B cell (primary cell): ENCODE measurements at regions of chr7 and their contacts with region 1.

Region 1: GRCh38 chr7:151080522-151081169 is at the start of gene FASTK:
- DNase-seq: peak; percentile 90
- ATAC-seq: peak; percentile 82
- H3K4me3 ChIP-seq: peak within 1 kb of the TSS; percentile 58 to 92 (median 89)
- H3K4me3 Mint-ChIP-seq: peak within 1 kb of the TSS; percentile 87
- H3K27ac ChIP-seq: peak within 1 kb of the TSS; percentile 68 to 92
- H3K27ac Mint-ChIP-seq: peak within 1 kb of the TSS; percentile 88
- H3K4me1 ChIP-seq: peaks cover 42 to 52% of the 10 kb centered on the region in 2 donors
- H3K4me1 Mint-ChIP-seq: peaks cover 52% of the 10 kb centered on the region
- H3K27me3 ChIP-seq: peaks cover 0 to 20% (median 8%) of the 10 kb centered on the region in 4 experiments
- H3K27me3 Mint-ChIP-seq: peaks cover 11% of the 10 kb centered on the region
- CTCF ChIP-seq: no peak
- total RNA-seq, gene FASTK: 119 and 120 TPM in 2 replicates

Region 2: DNA sequence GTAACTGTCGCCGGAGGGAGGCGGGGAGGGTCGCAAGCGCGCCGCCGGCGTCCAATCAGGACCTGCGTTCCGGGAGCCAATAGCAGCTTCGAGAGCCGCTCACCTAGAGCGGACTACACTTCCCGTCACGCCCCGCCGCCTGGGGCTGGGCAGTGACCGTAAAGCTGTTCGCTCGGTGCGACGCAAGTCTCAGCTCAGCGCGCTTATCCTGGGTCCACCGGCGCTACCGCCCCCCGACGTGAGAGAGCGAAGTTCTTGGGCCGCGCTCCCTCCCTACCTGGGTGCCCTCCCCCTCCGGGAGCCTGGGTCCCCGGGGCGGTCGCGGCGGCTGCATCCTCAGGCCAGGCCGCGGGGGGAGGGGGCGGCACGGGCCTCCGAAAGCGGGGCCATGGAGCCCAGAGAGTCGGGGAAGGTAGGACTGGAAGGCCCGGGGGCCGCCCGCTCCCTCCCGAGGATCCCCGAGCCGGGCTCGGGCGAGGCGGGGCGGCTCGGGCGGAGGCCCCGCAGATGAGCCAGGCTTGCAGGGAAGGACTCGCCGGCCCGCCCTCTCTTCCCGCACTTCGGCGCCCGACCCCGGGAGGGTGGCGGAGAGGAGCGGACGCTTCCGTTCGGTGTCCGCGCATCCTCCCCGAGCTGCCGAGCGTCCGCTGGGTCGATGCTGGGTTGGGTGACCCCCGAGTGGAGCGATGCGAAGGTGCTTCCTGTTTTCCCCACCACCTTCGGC is 1242.3 kb before region 1 on chr7 and contains the start of gene ZNF862:
- CTCF ChIA-PET with region 1: no interaction called
- POLR2A ChIA-PET with region 1: no interaction called
- intact Hi-C with region 1: loop called (anchors 5 kb)
- DNase-seq: peak; percentile 97
- ATAC-seq: peak; percentile 95
- H3K4me3 ChIP-seq: peak within 1 kb of the TSS; percentile 60 to 88 (median 73)
- H3K4me3 Mint-ChIP-seq: peak within 1 kb of the TSS; percentile 96
- H3K27ac ChIP-seq: peak within 1 kb of the TSS; percentile 51 to 77
- H3K27ac Mint-ChIP-seq: peak within 1 kb of the TSS; percentile 93
- H3K4me1 ChIP-seq: peaks cover 13 to 15% of the 10 kb centered on the region in 2 donors
- H3K4me1 Mint-ChIP-seq: peaks cover 19% of the 10 kb centered on the region
- H3K27me3 ChIP-seq: no peaks in the 10 kb centered on the region
- H3K27me3 Mint-ChIP-seq: peaks cover 22% of the 10 kb centered on the region
- CTCF ChIP-seq: no peak
- total RNA-seq, gene ZNF862: 24.3 and 33.0 TPM in 2 replicates

Region 3: GRCh38 chr7:151028131-151028947 is 52.3 kb before region 1 on chr7 and contains the start of gene ABCB8:
- CTCF ChIA-PET with region 1: interaction called, 3 read pairs
- POLR2A ChIA-PET with region 1: interaction called, 8 read pairs
- intact Hi-C with region 1: loop called (anchors 1 kb)
- DNase-seq: peak; percentile 99
- ATAC-seq: peak; percentile 92
- H3K4me3 ChIP-seq: peak within 1 kb of the TSS; percentile 54 to 86 (median 78)
- H3K4me3 Mint-ChIP-seq: peak within 1 kb of the TSS; percentile 97
- H3K27ac ChIP-seq: peak within 1 kb of the TSS; percentile 95 to 96
- H3K27ac Mint-ChIP-seq: peak within 1 kb of the TSS; percentile 99
- H3K4me1 ChIP-seq: peaks cover 11 to 17% of the 10 kb centered on the region in 2 donors
- H3K4me1 Mint-ChIP-seq: peaks cover 23% of the 10 kb centered on the region
- H3K27me3 ChIP-seq: peaks cover 0 to 20% (median 7%) of the 10 kb centered on the region in 4 experiments
- H3K27me3 Mint-ChIP-seq: peaks cover 7% of the 10 kb centered on the region
- CTCF ChIP-seq: peak; percentile 25
- total RNA-seq, gene ABCB8: 64.7 and 69.7 TPM in 2 replicates

Region 4: GRCh38 chr7:151226875-151227782 is 146.5 kb after region 1 on chr7 and contains the start of gene ABCF2:
- CTCF ChIA-PET with region 1: no interaction called
- POLR2A ChIA-PET with region 1: no interaction called
- intact Hi-C with region 1: loop called (anchors 1 kb)
- DNase-seq: peak; percentile 97
- ATAC-seq: peak; percentile 99
- H3K4me3 ChIP-seq: peak within 1 kb of the TSS; percentile 60 to 97 (median 81)
- H3K4me3 Mint-ChIP-seq: peak within 1 kb of the TSS; percentile 95
- H3K27ac ChIP-seq: peak within 1 kb of the TSS; percentile 39 to 73
- H3K27ac Mint-ChIP-seq: peak within 1 kb of the TSS; percentile 92
- H3K4me1 ChIP-seq: peaks cover 23 to 26% of the 10 kb centered on the region in 2 donors
- H3K4me1 Mint-ChIP-seq: peaks cover 48% of the 10 kb centered on the region
- H3K27me3 ChIP-seq: no peaks in the 10 kb centered on the region
- H3K27me3 Mint-ChIP-seq: no peaks in the 10 kb centered on the region
- CTCF ChIP-seq: no peak
- total RNA-seq, gene ABCF2: 27.1 and 30.2 TPM in 2 replicates

Region 5: GRCh38 chr7:151936207-151936606 is 855.6 kb after region 1 on chr7:
- CTCF ChIA-PET with region 1: no interaction called
- POLR2A ChIA-PET with region 1: no interaction called
- intact Hi-C with region 1: loop called (anchors 10 kb)
- DNase-seq: peak; percentile 82
- ATAC-seq: peak; percentile 81
- H3K4me3 ChIP-seq: peak overlapping the region in 3 of 5 experiments; percentile 6 to 48 (median 38)
- H3K4me3 Mint-ChIP-seq: peak overlapping the region; percentile 94
- H3K27ac ChIP-seq: peak overlapping the region; percentile 70 to 82
- H3K27ac Mint-ChIP-seq: peak overlapping the region; percentile 99
- H3K4me1 ChIP-seq: peaks cover 33 to 37% of the 10 kb centered on the region in 2 donors
- H3K4me1 Mint-ChIP-seq: peaks cover 39% of the 10 kb centered on the region
- H3K27me3 ChIP-seq: no peaks in the 10 kb centered on the region
- H3K27me3 Mint-ChIP-seq: peaks cover 4% of the 10 kb centered on the region
- CTCF ChIP-seq: no peak